Activated CD8-positive, alpha-beta T cell treated with anti-CD3 and anti-CD28 coated beads for 36 hours (primary cell): ENCODE measurements at regions of chr3 and their contacts with region 1.

Region 1: DNA sequence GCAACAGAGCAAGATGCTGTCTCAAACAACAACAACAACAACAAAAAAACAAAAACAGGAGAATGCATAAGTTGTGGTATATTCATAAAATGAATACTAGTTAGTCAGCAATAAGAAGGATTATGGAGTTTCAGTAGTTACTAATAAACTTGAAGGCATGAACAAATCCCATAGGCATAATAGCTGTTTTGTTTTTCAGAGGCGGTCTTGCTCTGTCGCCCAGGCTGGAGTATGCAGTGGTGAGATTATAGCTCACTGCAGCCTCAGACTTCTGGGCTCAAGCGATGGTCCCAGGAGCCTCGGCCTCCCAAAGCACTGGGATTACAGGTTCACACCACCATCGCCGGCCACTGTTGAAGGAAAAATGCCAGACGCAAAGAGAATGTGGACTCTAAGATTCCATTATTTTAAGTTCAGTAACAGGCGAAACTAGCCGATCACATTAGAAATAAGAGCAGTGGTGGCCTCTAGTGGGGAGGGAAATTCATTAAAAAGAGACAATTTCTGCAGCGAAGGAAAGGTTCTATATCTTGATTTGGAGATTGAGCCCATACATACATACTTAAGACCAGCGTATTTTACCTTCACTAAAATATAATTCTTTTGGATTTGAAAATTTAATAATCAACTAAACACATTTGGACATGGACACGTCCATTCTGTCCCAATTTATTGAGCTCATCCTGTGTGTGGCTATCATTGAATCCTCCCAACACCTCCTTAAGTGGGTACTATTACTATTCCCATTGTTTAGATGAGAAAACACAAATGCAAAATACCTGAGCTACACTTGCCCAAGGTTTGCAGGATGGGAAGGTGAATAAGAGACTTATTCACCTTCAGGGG is 27.4 kb upstream of the HDAC11 start:
- DNase-seq: peak; percentile 61
- ATAC-seq: peak; percentile 25
- H3K4me3 Mint-ChIP-seq: peak overlapping the region; percentile 82
- H3K27ac Mint-ChIP-seq: peak overlapping the region; percentile 89
- H3K4me1 Mint-ChIP-seq: peaks cover 13% of the 10 kb centered on the region
- H3K27me3 Mint-ChIP-seq: no peaks in the 10 kb centered on the region
- CTCF ChIP-seq: peak; percentile 78

Region 2: DNA sequence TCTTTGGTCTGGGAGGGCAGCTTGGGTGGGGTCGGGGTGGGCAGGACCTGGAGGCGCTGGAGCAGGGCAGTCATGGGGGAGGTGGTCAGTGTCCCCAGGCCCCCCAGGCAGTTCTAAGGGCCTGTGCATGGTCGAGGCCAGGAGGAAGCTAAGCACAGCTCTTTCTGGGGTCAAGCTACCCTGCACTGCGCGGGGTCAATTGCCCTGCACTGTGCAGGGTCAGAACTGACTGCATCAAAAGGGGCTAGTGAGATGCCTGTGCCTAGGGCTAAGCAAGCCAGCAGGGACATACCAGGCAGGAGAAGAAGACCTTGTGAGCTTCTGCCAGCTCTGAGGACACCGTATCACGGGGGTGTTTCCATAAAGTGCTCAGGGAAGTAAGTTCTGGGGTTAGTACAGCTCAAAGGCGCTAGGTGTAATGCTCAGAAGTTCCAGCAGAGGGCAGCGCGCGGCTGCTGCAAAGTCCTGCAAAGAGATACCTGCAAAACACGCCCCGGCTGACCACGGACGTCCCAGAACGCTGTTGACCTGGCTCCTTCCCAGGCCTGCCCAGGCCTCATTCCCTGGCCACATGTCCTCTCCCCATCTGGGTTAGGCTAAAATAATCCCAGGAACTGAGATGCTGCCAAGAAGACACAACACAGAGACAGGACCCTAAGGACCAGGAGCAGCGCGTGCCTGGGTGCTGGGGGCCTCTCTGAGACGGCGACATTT is 360.7 kb before region 1 on chr3:
- CTCF ChIA-PET with region 1: interaction called, 29 read pairs
- POLR2A ChIA-PET with region 1: no interaction called
- intact Hi-C with region 1: loop called (anchors 10 kb)
- DNase-seq: peak; percentile 89
- ATAC-seq: peak; percentile 96
- H3K4me3 Mint-ChIP-seq: no peak overlapping the region
- H3K27ac Mint-ChIP-seq: no peak overlapping the region
- H3K4me1 Mint-ChIP-seq: peaks cover 5% of the 10 kb centered on the region
- H3K27me3 Mint-ChIP-seq: no peaks in the 10 kb centered on the region
- CTCF ChIP-seq: peak; percentile 96

Region 3: DNA sequence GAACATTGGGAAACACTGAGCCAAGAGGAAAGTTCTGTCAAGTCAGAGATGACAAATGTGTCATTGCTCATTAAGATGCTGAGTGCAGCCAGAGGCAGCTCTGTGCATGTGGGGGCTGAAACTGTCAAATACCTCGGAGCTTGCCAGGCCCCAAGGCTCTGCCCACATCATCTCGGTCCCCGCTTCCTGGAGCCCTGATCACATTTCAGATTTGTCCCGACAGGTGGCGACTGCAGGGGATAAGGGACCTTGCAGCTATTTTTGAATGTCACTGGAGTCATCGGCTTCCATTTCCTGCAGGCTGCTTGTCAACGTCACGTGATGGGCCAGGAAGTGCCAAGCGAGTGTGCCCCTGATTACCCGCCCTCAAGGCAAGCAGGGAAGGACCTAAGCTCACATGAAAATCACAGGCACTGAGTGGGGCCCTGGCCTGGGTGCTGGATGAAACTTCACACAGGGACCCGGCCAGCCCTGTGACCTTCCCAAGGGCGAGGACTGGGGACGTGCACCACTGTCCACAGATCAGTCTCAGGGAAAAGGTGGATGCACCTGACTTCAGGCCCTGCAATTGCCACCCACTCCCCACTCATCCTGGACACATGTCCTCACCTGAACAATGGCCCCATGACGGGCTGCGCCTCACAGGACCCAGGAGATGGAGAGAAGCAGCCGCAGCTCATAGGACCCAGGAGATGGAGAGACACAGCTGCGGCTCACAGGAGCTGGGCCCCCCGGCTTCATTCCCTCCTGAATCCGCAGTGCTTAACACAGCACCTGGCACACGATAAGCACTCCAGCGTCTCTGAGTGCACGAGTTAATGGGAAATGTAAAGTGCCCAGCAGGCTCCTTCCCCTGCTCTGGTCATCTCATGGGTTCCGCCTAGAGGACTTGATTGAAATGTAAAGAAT is 106.0 kb before region 1 on chr3:
- CTCF ChIA-PET with region 1: interaction called, 125 read pairs
- POLR2A ChIA-PET with region 1: no interaction called
- intact Hi-C with region 1: loop called (anchors 5 kb)
- DNase-seq: peak; percentile 93
- ATAC-seq: peak; percentile 95
- H3K4me3 Mint-ChIP-seq: no peak overlapping the region
- H3K27ac Mint-ChIP-seq: peak overlapping the region; percentile 87
- H3K4me1 Mint-ChIP-seq: peaks cover 58% of the 10 kb centered on the region
- H3K27me3 Mint-ChIP-seq: no peaks in the 10 kb centered on the region
- CTCF ChIP-seq: peak; percentile 50

Region 4: DNA sequence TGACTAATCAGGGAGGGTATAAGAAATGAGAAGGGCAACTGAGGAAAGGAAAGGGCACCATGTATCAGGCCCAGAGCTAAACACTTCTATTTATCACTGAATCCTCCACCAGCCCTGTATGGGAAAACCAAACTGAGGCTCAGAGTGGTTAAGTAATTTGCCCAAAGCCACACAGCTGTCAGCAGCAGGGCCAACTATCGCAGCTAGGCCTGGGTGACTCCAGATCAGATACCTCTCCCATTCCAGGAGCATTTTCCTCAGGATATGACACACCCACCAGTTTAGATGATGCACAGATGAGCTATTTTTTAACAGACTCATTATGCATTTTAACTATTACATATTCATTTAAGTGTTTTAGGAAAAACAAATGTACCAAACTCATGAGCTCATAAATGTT is 47.1 kb before region 1 on chr3:
- CTCF ChIA-PET with region 1: interaction called, 38 read pairs
- POLR2A ChIA-PET with region 1: interaction called, 3 read pairs
- intact Hi-C with region 1: no loop called
- DNase-seq: no peak
- ATAC-seq: no peak
- H3K4me3 Mint-ChIP-seq: no peak overlapping the region
- H3K27ac Mint-ChIP-seq: peak overlapping the region; percentile 52
- H3K4me1 Mint-ChIP-seq: peaks cover 54% of the 10 kb centered on the region
- H3K27me3 Mint-ChIP-seq: no peaks in the 10 kb centered on the region
- CTCF ChIP-seq: no peak

Region 5: GRCh38 chr3:13419505-13420044 is 33.1 kb before region 1 on chr3:
- CTCF ChIA-PET with region 1: interaction called, 125 read pairs
- POLR2A ChIA-PET with region 1: interaction called, 35 read pairs
- intact Hi-C with region 1: loop called (anchors 2 kb)
- DNase-seq: peak; percentile 63
- ATAC-seq: peak; percentile 27
- H3K4me3 Mint-ChIP-seq: peak overlapping the region; percentile 90
- H3K27ac Mint-ChIP-seq: peak overlapping the region; percentile 96
- H3K4me1 Mint-ChIP-seq: peaks cover 51% of the 10 kb centered on the region
- H3K27me3 Mint-ChIP-seq: no peaks in the 10 kb centered on the region
- CTCF ChIP-seq: peak; percentile 32

Region 6: GRCh38 chr3:13433912-13434311 is 18.8 kb before region 1 on chr3:
- CTCF ChIA-PET with region 1: interaction called, 19 read pairs
- POLR2A ChIA-PET with region 1: interaction called, 4 read pairs
- intact Hi-C with region 1: no loop called
- DNase-seq: no peak
- ATAC-seq: no peak
- H3K4me3 Mint-ChIP-seq: no peak overlapping the region
- H3K27ac Mint-ChIP-seq: no peak overlapping the region
- H3K4me1 Mint-ChIP-seq: peaks cover 5% of the 10 kb centered on the region
- H3K27me3 Mint-ChIP-seq: no peaks in the 10 kb centered on the region
- CTCF ChIP-seq: no peak

Region 7: GRCh38 chr3:13479581-13480339 is 27.0 kb after region 1 on chr3 and contains the start of gene HDAC11:
- CTCF ChIA-PET with region 1: interaction called, 18 read pairs
- POLR2A ChIA-PET with region 1: interaction called, 7 read pairs
- intact Hi-C with region 1: no loop called
- DNase-seq: peak; percentile 98
- ATAC-seq: peak; percentile 97
- H3K4me3 Mint-ChIP-seq: peak within 1 kb of the TSS; percentile 90
- H3K27ac Mint-ChIP-seq: peak within 1 kb of the TSS; percentile 89
- H3K4me1 Mint-ChIP-seq: peaks cover 20% of the 10 kb centered on the region
- H3K27me3 Mint-ChIP-seq: no peaks in the 10 kb centered on the region
- CTCF ChIP-seq: no peak
- total RNA-seq, gene HDAC11: 1.8 to 2.0 TPM